ENCODE measurements at regions of chr11 and their contacts with region 1.

Region 1: GRCh38 chr11:14454861-14455632 is 44.6 kb downstream of the COPB1 start:
- DNase-seq: peak; percentile 38
- H3K4me3 Mint-ChIP-seq: no peak overlapping the region
- H3K27ac Mint-ChIP-seq: no peak overlapping the region
- H3K4me1 Mint-ChIP-seq: no peaks in the 10 kb centered on the region
- H3K27me3 Mint-ChIP-seq: no peaks in the 10 kb centered on the region
- CTCF ChIP-seq: peak; percentile 52

Region 2: DNA sequence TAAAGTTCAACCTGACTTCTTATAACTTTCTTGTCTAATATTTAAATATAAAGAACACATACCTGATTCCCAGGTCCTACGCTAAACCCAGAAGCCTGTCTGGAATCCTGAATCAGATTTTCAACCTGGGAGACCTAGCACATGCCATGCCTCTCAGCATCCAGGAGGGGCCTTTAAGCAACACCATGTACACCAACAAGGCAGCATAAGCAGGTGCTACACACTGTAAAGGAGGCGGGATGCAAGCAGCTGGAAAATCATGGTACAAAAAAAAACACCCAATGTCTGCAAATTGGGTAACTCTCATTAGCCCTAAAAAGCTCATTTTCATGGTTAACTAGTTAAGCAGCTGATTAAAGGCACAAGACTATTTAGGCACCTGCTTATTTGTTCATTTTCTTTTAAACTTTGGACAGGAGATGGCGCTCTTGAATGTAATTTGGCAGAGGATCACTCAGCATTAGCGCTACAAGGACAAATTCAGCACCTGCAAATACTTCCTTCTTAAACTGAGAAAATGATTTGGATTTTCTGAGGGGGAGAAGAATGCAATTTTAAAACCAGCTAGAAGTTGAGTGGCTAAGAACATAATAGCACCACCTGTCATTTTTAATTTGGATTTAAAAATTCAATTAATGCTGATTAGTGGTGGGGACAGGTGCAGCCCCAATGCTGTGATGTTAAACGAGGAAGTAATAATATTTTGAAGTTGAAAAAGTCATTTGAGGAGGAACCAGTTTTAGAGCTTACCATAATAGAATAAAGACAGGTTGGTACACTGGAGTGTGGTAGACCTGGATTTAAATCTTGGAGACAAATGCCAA is 682.6 kb before region 1 on chr11:
- CTCF ChIA-PET with region 1: interaction called, 4 read pairs
- POLR2A ChIA-PET with region 1: no interaction called
- intact Hi-C with region 1: loop called (anchors 10 kb)
- DNase-seq: peak; percentile 76
- H3K4me3 Mint-ChIP-seq: no peak overlapping the region
- H3K27ac Mint-ChIP-seq: no peak overlapping the region
- H3K4me1 Mint-ChIP-seq: no peaks in the 10 kb centered on the region
- H3K27me3 Mint-ChIP-seq: peaks cover 54% of the 10 kb centered on the region
- CTCF ChIP-seq: peak; percentile 74

Region 3: GRCh38 chr11:14300661-14301304 is 154.3 kb before region 1 on chr11:
- CTCF ChIA-PET with region 1: interaction called, 179 read pairs
- POLR2A ChIA-PET with region 1: interaction called, 16 read pairs
- intact Hi-C with region 1: loop called (anchors 1 kb)
- DNase-seq: peak; percentile 75
- H3K4me3 Mint-ChIP-seq: no peak overlapping the region
- H3K27ac Mint-ChIP-seq: no peak overlapping the region
- H3K4me1 Mint-ChIP-seq: peaks cover 6% of the 10 kb centered on the region
- H3K27me3 Mint-ChIP-seq: no peaks in the 10 kb centered on the region
- CTCF ChIP-seq: peak; percentile 82

Region 4: GRCh38 chr11:14358729-14359439 is 96.2 kb before region 1 on chr11 and contains the start of gene RRAS2:
- CTCF ChIA-PET with region 1: interaction called, 7 read pairs
- POLR2A ChIA-PET with region 1: interaction called, 5 read pairs
- intact Hi-C with region 1: loop called (anchors 2 kb)
- DNase-seq: peak; percentile 74
- H3K4me3 Mint-ChIP-seq: peak within 1 kb of the TSS; percentile 94
- H3K27ac Mint-ChIP-seq: peak within 1 kb of the TSS; percentile 97
- H3K4me1 Mint-ChIP-seq: peaks cover 32% of the 10 kb centered on the region
- H3K27me3 Mint-ChIP-seq: no peaks in the 10 kb centered on the region
- CTCF ChIP-seq: no peak
- total RNA-seq, gene RRAS2: 128 and 145 TPM in 2 replicates

Region 5: GRCh38 chr11:14422052-14422813 is 32.8 kb before region 1 on chr11:
- CTCF ChIA-PET with region 1: interaction called, 56 read pairs
- POLR2A ChIA-PET with region 1: interaction called, 6 read pairs
- intact Hi-C with region 1: loop called (anchors 5 kb)
- DNase-seq: peak; percentile 91
- H3K4me3 Mint-ChIP-seq: no peak overlapping the region
- H3K27ac Mint-ChIP-seq: no peak overlapping the region
- H3K4me1 Mint-ChIP-seq: peaks cover 17% of the 10 kb centered on the region
- H3K27me3 Mint-ChIP-seq: no peaks in the 10 kb centered on the region
- CTCF ChIP-seq: no peak

Region 6: DNA sequence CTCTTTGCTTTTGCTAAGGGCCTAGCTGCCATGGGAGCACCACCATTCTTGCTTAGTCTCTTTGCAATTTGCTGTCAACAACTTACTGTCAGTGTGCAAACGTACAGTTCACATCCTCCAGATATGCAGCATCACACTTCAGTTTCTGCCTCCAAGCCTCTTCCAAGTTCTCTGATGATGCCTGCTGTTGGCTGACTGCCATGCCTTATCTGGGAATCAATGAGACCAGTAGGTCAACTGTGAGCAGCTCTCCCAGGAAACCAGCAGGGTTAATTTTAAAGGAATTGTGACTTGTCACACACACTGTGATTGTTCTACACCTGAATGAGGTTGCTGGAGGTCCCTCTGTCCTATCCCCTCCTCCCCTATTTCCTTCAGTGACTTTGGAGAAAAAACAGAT is 11.4 kb before region 1 on chr11:
- CTCF ChIA-PET with region 1: interaction called, 22 read pairs
- POLR2A ChIA-PET with region 1: interaction called, 3 read pairs
- intact Hi-C with region 1: no loop called
- DNase-seq: peak; percentile 33
- H3K4me3 Mint-ChIP-seq: no peak overlapping the region
- H3K27ac Mint-ChIP-seq: no peak overlapping the region
- H3K4me1 Mint-ChIP-seq: peaks cover 8% of the 10 kb centered on the region
- H3K27me3 Mint-ChIP-seq: no peaks in the 10 kb centered on the region
- CTCF ChIP-seq: no peak

Region 7: GRCh38 chr11:14480716-14481115 is 25.7 kb after region 1 on chr11:
- CTCF ChIA-PET with region 1: interaction called, 14 read pairs
- POLR2A ChIA-PET with region 1: interaction called, 5 read pairs
- intact Hi-C with region 1: no loop called
- DNase-seq: no peak
- H3K4me3 Mint-ChIP-seq: no peak overlapping the region
- H3K27ac Mint-ChIP-seq: peak overlapping the region; percentile 57
- H3K4me1 Mint-ChIP-seq: peaks cover 6% of the 10 kb centered on the region
- H3K27me3 Mint-ChIP-seq: no peaks in the 10 kb centered on the region
- CTCF ChIP-seq: no peak